Naive thymus-derived CD4-positive, alpha-beta T cell (primary cell): ENCODE measurements at regions of chr6 and their contacts with region 1.

Region 1: GRCh38 chr6:30483677-30484279 is 5.5 kb upstream of the HLA-E start:
- DNase-seq: peak in 4 of 9 donors; percentile 42 to 56 (median 54)
- ATAC-seq: no peak
- H3K4me3 ChIP-seq: no peak overlapping the region
- H3K4me3 Mint-ChIP-seq: no peak overlapping the region
- H3K27ac ChIP-seq: no peak overlapping the region
- H3K27ac Mint-ChIP-seq: peak overlapping the region in 1 of 9 donors; percentile 7
- H3K4me1 ChIP-seq: peaks cover 21 to 23% of the 10 kb centered on the region in 2 donors
- H3K4me1 Mint-ChIP-seq: peaks cover 19 to 49% (median 39%) of the 10 kb centered on the region in 7 donors
- H3K27me3 ChIP-seq: peaks cover 8 to 23% of the 10 kb centered on the region in 2 donors
- H3K27me3 Mint-ChIP-seq: peaks cover 26 to 52% (median 30%) of the 10 kb centered on the region in 5 donors

Region 2: DNA sequence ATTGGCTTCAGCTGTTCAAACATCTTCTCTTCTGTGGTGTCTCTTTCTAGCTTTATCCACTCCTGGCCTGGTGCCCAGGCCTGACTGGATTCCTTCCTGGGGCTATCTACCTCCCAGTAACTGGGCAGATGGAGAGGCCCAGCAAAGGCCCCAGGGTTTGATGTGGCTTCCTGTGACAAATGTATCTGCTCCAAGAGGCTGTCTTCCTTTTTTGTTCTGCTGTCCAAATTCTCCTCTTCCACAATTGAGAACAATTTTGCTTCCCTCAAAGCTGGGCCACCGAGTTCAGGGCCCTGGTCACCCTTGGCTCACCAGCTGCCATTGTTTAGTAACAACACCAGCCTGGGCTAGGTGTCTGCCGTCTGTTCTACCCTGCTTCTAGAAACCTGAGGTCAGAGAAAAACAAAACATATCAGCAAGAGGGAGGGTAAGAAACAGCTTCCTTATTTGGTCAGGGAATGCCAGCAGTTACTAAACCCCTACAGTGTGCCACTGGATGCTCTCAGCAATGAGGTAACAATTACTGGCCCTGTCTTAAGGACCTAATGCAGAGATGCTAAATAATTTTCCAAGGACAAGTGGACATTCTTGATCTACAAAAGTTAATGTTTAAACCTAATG is 806.7 kb before region 1 on chr6:
- CTCF ChIA-PET with region 1: no interaction called
- POLR2A ChIA-PET with region 1: no interaction called
- intact Hi-C with region 1: no loop called
- DNase-seq: no peak
- ATAC-seq: peak; percentile 31
- H3K4me3 ChIP-seq: no peak overlapping the region
- H3K4me3 Mint-ChIP-seq: peak overlapping the region in 1 of 10 donors; percentile 60
- H3K27ac ChIP-seq: no peak overlapping the region
- H3K27ac Mint-ChIP-seq: peak overlapping the region in 3 of 9 donors; percentile 67 to 72 (median 71)
- H3K4me1 ChIP-seq: no peaks in the 10 kb centered on the region
- H3K4me1 Mint-ChIP-seq: peaks cover 6 to 27% (median 11%) of the 10 kb centered on the region in 7 donors
- H3K27me3 ChIP-seq: no peaks in the 10 kb centered on the region
- H3K27me3 Mint-ChIP-seq: peaks cover 0 to 9% (median 4%) of the 10 kb centered on the region in 5 donors

Region 3: DNA sequence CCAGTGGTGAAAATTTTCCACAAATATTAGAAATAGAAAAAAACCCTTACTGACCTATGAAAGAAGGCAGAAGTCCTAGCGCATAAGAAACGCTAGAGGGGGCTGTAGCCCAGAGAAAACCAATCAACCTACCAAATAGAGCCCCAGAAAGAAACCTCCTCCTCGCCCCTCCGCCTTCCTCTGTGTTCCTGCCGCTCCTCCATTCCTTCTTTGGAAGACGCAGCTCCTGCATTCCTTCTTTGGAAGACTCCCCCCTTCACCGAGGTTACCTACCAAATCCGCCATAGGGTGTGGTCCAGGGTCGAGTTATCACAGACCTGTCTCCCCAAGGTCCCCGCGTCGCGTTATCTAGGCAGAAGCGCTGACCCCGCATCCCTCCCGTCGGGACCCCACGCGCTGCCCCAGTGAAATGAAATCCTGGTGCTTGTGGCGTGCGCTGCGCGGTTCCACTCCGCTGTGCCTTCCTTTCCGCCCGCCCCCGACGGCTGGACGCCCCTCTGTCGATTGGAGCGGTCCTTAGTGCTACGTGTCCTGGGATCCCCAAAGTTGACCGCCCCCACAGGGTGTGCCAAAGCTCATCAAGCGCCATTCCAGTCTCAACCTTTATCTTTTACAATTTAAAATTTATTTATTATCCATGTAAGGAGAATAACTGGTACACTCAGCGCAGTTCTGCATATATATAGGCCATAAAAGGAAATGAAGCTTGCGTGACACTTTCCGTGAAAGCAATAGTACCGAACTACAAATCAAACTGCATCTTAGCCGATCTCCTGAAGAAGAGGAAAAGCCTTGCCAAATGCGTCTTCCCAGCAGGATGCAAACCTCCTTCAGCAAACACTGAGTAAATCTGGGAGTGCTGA is 125.9 kb before region 1 on chr6:
- CTCF ChIA-PET with region 1: no interaction called
- POLR2A ChIA-PET with region 1: no interaction called
- intact Hi-C with region 1: no loop called
- DNase-seq: peak; percentile 19 to 62 (median 51)
- ATAC-seq: peak; percentile 83
- H3K4me3 ChIP-seq: peak overlapping the region; percentile 59
- H3K4me3 Mint-ChIP-seq: peak overlapping the region; percentile 75 to 89 (median 86)
- H3K27ac ChIP-seq: no peak overlapping the region
- H3K27ac Mint-ChIP-seq: no peak overlapping the region
- H3K4me1 ChIP-seq: peaks cover 0 to 5% of the 10 kb centered on the region in 2 donors
- H3K4me1 Mint-ChIP-seq: peaks cover 0 to 10% (median 6%) of the 10 kb centered on the region in 7 donors
- H3K27me3 ChIP-seq: peaks cover 10 to 11% of the 10 kb centered on the region in 2 donors
- H3K27me3 Mint-ChIP-seq: peaks cover 37 to 84% (median 56%) of the 10 kb centered on the region in 5 donors

Region 4: DNA sequence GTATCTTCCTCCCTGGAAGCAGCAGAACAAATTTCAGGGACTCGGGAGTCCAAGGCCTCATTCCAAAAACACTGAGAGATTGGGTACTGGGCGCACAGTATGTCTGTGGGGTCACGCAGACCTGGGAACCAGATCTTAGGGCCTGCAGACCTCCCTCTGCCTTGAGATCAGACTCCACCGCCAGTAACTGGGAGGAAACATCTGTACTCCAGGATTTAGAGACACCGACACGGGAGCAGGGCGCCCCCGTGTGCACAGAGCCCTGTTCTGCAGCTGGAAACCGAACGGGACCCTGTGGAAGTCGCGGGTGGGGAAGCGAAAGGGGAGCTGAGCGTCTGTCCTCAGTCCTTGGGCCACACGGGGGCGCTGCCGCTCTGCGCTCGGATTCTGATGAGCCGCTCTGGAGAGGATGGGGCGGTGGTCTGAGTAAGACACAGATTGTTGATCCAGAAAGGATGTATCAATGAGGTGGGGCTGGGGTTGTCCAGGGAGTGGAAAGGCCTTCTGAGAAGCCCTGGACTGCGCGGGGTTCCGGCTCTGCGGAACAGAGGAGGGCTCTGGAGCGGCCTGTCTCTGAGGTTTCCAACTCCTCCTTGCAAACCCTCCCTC is 30.2 kb before region 1 on chr6:
- CTCF ChIA-PET with region 1: interaction called, 20 read pairs
- POLR2A ChIA-PET with region 1: interaction called, 4 read pairs
- intact Hi-C with region 1: loop called (anchors 1 to 2 kb)
- DNase-seq: peak; percentile 73 to 90 (median 81)
- ATAC-seq: peak; percentile 86
- H3K4me3 ChIP-seq: peak overlapping the region; percentile 43
- H3K4me3 Mint-ChIP-seq: peak overlapping the region; percentile 49 to 84 (median 73)
- H3K27ac ChIP-seq: no peak overlapping the region
- H3K27ac Mint-ChIP-seq: no peak overlapping the region
- H3K4me1 ChIP-seq: peaks cover 37 to 44% of the 10 kb centered on the region in 2 donors
- H3K4me1 Mint-ChIP-seq: peaks cover 23 to 56% (median 51%) of the 10 kb centered on the region in 7 donors
- H3K27me3 ChIP-seq: peaks cover 22 to 29% of the 10 kb centered on the region in 2 donors
- H3K27me3 Mint-ChIP-seq: peaks cover 67 to 91% (median 82%) of the 10 kb centered on the region in 5 donors

Region 5: GRCh38 chr6:30533460-30534294 is 49.9 kb after region 1 on chr6:
- CTCF ChIA-PET with region 1: interaction called, 263 read pairs
- POLR2A ChIA-PET with region 1: interaction called, 199 read pairs
- intact Hi-C with region 1: loop called (anchors 1 kb)
- DNase-seq: no peak
- ATAC-seq: peak; percentile 29
- H3K4me3 ChIP-seq: no peak overlapping the region
- H3K4me3 Mint-ChIP-seq: peak overlapping the region in 8 of 10 donors; percentile 49 to 91 (median 64)
- H3K27ac ChIP-seq: no peak overlapping the region
- H3K27ac Mint-ChIP-seq: peak overlapping the region in 7 of 9 donors; percentile 53 to 91 (median 81)
- H3K4me1 ChIP-seq: peaks cover 19 to 24% of the 10 kb centered on the region in 2 donors
- H3K4me1 Mint-ChIP-seq: peaks cover 16 to 41% (median 32%) of the 10 kb centered on the region in 7 donors
- H3K27me3 ChIP-seq: no peaks in the 10 kb centered on the region
- H3K27me3 Mint-ChIP-seq: peaks cover 0 to 3% (median 0%) of the 10 kb centered on the region in 5 donors

Region 6: GRCh38 chr6:30600451-30600961 is 116.7 kb after region 1 on chr6:
- CTCF ChIA-PET with region 1: interaction called, 128 read pairs
- POLR2A ChIA-PET with region 1: interaction called, 7 read pairs
- intact Hi-C with region 1: loop called (anchors 1 kb)
- DNase-seq: no peak
- ATAC-seq: no peak
- H3K4me3 ChIP-seq: no peak overlapping the region
- H3K4me3 Mint-ChIP-seq: no peak overlapping the region
- H3K27ac ChIP-seq: peak overlapping the region; percentile 47
- H3K27ac Mint-ChIP-seq: peak overlapping the region in 7 of 9 donors; percentile 58 to 85 (median 79)
- H3K4me1 ChIP-seq: peaks cover 3 to 5% of the 10 kb centered on the region in 2 donors
- H3K4me1 Mint-ChIP-seq: peaks cover 16 to 35% (median 25%) of the 10 kb centered on the region in 7 donors
- H3K27me3 ChIP-seq: no peaks in the 10 kb centered on the region
- H3K27me3 Mint-ChIP-seq: no peaks in the 10 kb centered on the region

Region 7: DNA sequence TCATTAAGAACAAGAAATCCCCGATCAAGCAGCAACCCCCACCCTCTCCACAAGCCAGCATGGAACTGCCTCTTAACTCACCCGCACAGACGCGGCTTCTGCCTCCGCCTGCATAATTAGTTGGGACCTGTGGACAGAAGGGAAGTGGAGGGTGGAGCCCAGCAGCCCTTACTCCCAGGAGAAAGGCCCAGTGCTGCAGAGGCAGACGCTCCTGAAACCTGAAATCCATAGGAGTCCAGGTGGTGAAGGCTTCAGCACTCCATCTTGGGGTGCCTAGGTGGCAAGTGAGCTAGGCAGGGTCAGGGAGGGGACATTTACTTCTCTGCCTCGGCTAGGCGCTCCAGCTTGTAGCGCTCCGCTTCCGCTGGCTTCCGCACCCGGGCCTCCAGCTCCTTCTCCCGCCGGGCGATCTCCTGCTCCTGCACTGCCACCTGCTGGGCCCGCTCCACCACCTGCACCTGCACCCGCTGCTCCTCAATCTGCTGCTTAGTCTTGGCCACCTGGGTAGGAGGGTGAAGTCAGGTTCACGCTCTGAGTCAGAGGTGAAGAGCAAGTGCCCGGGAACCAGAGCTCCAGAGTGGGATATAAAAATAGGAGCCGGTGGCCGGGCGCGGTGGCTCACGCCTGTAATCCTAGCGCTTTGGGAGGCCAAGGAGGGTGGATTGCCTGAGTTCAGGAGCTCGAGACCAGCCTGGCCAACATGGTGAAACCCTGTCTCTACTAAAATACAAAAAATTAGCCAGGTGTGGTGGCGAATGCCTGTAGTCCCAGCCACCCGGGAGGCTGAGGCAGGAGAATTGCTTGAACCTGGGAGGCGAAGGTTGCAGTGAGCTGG is 247.0 kb after region 1 on chr6:
- CTCF ChIA-PET with region 1: interaction called, 10 read pairs
- POLR2A ChIA-PET with region 1: interaction called, 8 read pairs
- intact Hi-C with region 1: loop called (anchors 1 to 2 kb)
- DNase-seq: peak; percentile 62 to 86 (median 81)
- ATAC-seq: peak; percentile 97
- H3K4me3 ChIP-seq: no peak overlapping the region
- H3K4me3 Mint-ChIP-seq: peak overlapping the region in 9 of 10 donors; percentile 27 to 69 (median 55)
- H3K27ac ChIP-seq: peak overlapping the region; percentile 52
- H3K27ac Mint-ChIP-seq: peak overlapping the region in 7 of 9 donors; percentile 29 to 79 (median 73)
- H3K4me1 ChIP-seq: peaks cover 14 to 30% of the 10 kb centered on the region in 2 donors
- H3K4me1 Mint-ChIP-seq: peaks cover 27 to 54% (median 42%) of the 10 kb centered on the region in 7 donors
- H3K27me3 ChIP-seq: no peaks in the 10 kb centered on the region
- H3K27me3 Mint-ChIP-seq: no peaks in the 10 kb centered on the region

Region 8: GRCh38 chr6:31087494-31088089 is 603.8 kb after region 1 on chr6:
- CTCF ChIA-PET with region 1: no interaction called
- POLR2A ChIA-PET with region 1: no interaction called
- intact Hi-C with region 1: loop called in 1 of 2 experiments (anchors 2 kb)
- DNase-seq: peak; percentile 66 to 89 (median 80)
- ATAC-seq: peak; percentile 100
- H3K4me3 ChIP-seq: no peak overlapping the region
- H3K4me3 Mint-ChIP-seq: no peak overlapping the region
- H3K27ac ChIP-seq: no peak overlapping the region
- H3K27ac Mint-ChIP-seq: peak overlapping the region in 4 of 9 donors; percentile 9 to 73 (median 46)
- H3K4me1 ChIP-seq: no peaks in the 10 kb centered on the region
- H3K4me1 Mint-ChIP-seq: peaks cover 6 to 14% (median 10%) of the 10 kb centered on the region in 7 donors
- H3K27me3 ChIP-seq: no peaks in the 10 kb centered on the region
- H3K27me3 Mint-ChIP-seq: peaks cover 0 to 21% (median 0%) of the 10 kb centered on the region in 5 donors